ENCODE measurements at regions of chr1 and their contacts with region 1.

Region 1: GRCh38 chr1:184805667-184806295 is 51.1 kb upstream of the EDEM3 start:
- DNase-seq: peak; percentile 89 to 93
- ATAC-seq: peak; percentile 79 to 89 (median 80)
- H3K4me3 ChIP-seq: no peak overlapping the region
- H3K27ac ChIP-seq: peak overlapping the region; percentile 84
- H3K4me1 ChIP-seq: peaks cover 47% of the 10 kb centered on the region
- H3K27me3 ChIP-seq: no peaks in the 10 kb centered on the region
- CTCF ChIP-seq: peak; percentile 94

Region 2: GRCh38 chr1:184754476-184755225 is 51.1 kb before region 1 on chr1 and contains the start of gene EDEM3:
- intact Hi-C with region 1: no loop called
- DNase-seq: peak; percentile 99
- ATAC-seq: peak; percentile 95 to 98 (median 96)
- H3K4me3 ChIP-seq: peak within 1 kb of the TSS; percentile 95
- H3K27ac ChIP-seq: peak within 1 kb of the TSS; percentile 93
- H3K4me1 ChIP-seq: peaks cover 22% of the 10 kb centered on the region
- H3K27me3 ChIP-seq: no peaks in the 10 kb centered on the region
- CTCF ChIP-seq: no peak
- total RNA-seq, gene EDEM3: 19.2 to 36.4 (median 27.9) TPM

Region 3: GRCh38 chr1:184843732-184844495 is 38.1 kb after region 1 on chr1:
- intact Hi-C with region 1: no loop called
- DNase-seq: no peak
- ATAC-seq: peak; percentile 55 to 85 (median 68)
- H3K4me3 ChIP-seq: no peak overlapping the region
- H3K27ac ChIP-seq: peak overlapping the region; percentile 67
- H3K4me1 ChIP-seq: peaks cover 16% of the 10 kb centered on the region
- H3K27me3 ChIP-seq: no peaks in the 10 kb centered on the region
- CTCF ChIP-seq: no peak

Region 4: DNA sequence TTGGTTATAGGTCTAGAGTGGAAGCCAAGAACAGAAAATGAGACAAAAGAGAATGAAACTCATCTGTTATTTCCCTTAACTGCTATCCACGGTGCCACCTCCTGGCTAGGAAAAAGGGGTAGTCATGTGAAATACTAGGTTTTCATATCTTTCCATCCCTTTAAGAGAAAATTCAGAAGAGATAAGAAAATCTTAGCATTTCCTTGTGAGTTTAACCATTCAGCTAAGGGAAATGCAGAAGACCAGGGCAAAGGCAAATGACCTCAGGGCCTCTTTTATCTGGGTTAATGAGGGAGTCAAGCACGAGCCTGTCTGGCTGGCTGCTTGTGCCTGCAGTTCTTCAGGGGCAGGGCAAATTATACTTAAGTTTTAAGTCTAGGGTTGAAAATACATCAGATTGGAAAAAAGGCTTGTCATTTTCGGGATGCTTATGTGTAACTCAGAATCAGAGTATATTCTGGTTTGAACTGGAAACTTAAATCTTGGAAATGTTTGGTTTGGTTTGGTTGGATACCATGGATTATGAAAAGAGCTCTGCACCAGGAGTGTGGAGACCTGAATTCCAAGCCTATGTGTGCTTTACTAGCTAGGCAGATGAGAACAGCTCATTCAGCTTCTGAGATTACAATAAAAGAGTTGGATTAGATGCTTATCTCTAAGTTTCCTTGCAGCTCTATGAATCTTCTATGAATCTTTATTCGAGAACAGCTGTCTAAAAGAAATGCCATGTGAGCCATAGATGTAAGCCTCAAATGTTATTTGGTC is 148.6 kb after region 1 on chr1:
- intact Hi-C with region 1: no loop called
- DNase-seq: no peak
- ATAC-seq: no peak
- H3K4me3 ChIP-seq: no peak overlapping the region
- H3K27ac ChIP-seq: peak overlapping the region; percentile 6
- H3K4me1 ChIP-seq: peaks cover 15% of the 10 kb centered on the region
- H3K27me3 ChIP-seq: no peaks in the 10 kb centered on the region
- CTCF ChIP-seq: no peak

Region 5: GRCh38 chr1:184973272-184974055 is 167.7 kb after region 1 on chr1:
- intact Hi-C with region 1: loop called in 1 of 2 experiments (anchors 2 kb)
- DNase-seq: peak; percentile 41 to 70
- ATAC-seq: peak; percentile 61 to 85 (median 78)
- H3K4me3 ChIP-seq: peak overlapping the region; percentile 80
- H3K27ac ChIP-seq: peak overlapping the region; percentile 89
- H3K4me1 ChIP-seq: peaks cover 20% of the 10 kb centered on the region
- H3K27me3 ChIP-seq: no peaks in the 10 kb centered on the region
- CTCF ChIP-seq: no peak

Region 6: DNA sequence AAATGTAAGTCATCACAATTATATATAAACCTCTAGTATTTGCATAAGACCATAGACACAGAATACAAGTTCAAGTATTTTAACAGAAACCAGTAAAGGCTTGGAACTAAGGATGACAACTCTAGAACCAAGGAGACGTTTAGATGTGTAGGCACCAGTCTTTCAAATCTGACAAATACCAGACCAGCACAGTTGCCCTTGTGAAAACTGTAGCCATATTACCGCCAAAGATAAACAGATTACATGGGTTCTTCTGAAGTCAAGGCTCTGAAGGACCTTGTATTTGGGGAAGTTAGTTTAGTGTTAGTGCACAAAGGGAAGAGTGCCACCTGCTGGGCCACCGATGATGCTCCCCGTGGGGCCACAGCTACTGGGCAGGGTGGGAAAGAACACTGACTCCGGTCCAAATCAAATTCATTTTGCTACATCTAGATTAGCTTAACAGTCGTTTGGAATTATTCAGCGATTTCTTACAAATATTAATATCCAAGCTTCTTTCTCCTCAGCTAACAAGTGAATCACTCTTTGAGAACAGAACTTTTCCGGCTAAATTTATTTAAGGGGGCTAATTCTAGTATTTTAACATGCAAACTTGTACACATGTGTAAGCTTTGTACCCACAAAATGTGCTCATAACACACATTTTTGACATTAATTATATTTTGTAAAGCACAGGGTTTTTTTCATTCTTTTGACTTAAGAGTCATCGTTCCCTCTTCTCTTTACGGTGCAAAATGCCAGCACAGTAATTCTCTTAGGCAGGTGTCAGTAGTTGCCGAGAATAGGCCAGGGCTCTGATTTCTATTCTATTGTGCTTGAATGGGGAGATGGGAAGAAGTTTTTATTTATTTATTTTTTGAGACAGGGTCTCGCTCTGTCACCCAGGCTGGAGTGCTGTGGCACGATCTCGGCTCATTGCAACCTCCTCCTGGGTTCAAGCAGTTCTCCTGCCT is 176.5 kb after region 1 on chr1:
- intact Hi-C with region 1: loop called (anchors 1 kb)
- DNase-seq: peak; percentile 76 to 88
- ATAC-seq: peak; percentile 97 to 100 (median 98)
- H3K4me3 ChIP-seq: peak overlapping the region; percentile 34
- H3K27ac ChIP-seq: no peak overlapping the region
- H3K4me1 ChIP-seq: peaks cover 9% of the 10 kb centered on the region
- H3K27me3 ChIP-seq: no peaks in the 10 kb centered on the region
- CTCF ChIP-seq: peak; percentile 98

Region 7: GRCh38 chr1:185551008-185551407 is 745.2 kb after region 1 on chr1:
- intact Hi-C with region 1: no loop called
- DNase-seq: peak in 1 of 2 donors; percentile 18
- ATAC-seq: no peak
- H3K4me3 ChIP-seq: no peak overlapping the region
- H3K27ac ChIP-seq: no peak overlapping the region
- H3K4me1 ChIP-seq: no peaks in the 10 kb centered on the region
- H3K27me3 ChIP-seq: no peaks in the 10 kb centered on the region
- CTCF ChIP-seq: no peak